HEK293 (cell line): ENCODE measurements at regions of chr5 and their contacts with region 1.

Region 1: GRCh38 chr5:141420855-141421496 is at the start of gene PCDHGA11:
- H3K4me3 ChIP-seq: peak within 1 kb of the TSS; percentile 67
- H3K27ac ChIP-seq: no peak within 1 kb of the TSS
- H3K4me1 ChIP-seq: no peaks in the 10 kb centered on the region
- CTCF ChIP-seq: peak; percentile 59

Region 2: GRCh38 chr5:141392429-141393198 is 28.4 kb before region 1 on chr5 and contains the start of gene PCDHGA8:
- CTCF ChIA-PET with region 1: interaction called, 15 read pairs
- POLR2A ChIA-PET with region 1: no interaction called
- H3K4me3 ChIP-seq: no peak within 1 kb of the TSS
- H3K27ac ChIP-seq: no peak within 1 kb of the TSS
- H3K4me1 ChIP-seq: no peaks in the 10 kb centered on the region
- CTCF ChIP-seq: no peak

Region 3: GRCh38 chr5:141475625-141476131 is 54.7 kb after region 1 on chr5 and contains the start of gene PCDHGC3:
- CTCF ChIA-PET with region 1: interaction called, 10 read pairs
- POLR2A ChIA-PET with region 1: no interaction called
- H3K4me3 ChIP-seq: peak within 1 kb of the TSS; percentile 44
- H3K27ac ChIP-seq: peak within 1 kb of the TSS; percentile 43; the same call in 1 of the 2 replicates
- H3K4me1 ChIP-seq: 0 out of 2 replicates have a peak, but pooled peaks cover 4% of the 10 kb centered on the region
- CTCF ChIP-seq: peak; percentile 59

Region 4: DNA sequence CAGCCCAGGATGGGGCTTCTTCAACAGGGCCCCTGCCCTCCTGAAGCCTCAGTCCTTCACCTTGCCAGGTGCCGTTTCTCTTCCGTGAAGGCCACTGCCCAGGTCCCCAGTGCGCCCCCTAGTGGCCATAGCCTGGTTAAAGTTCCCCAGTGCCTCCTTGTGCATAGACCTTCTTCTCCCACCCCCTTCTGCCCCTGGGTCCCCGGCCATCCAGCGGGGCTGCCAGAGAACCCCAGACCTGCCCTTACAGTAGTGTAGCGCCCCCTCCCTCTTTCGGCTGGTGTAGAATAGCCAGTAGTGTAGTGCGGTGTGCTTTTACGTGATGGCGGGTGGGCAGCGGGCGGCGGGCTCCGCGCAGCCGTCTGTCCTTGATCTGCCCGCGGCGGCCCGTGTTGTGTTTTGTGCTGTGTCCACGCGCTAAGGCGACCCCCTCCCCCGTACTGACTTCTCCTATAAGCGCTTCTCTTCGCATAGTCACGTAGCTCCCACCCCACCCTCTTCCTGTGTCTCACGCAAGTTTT is 91.5 kb after region 1 on chr5:
- CTCF ChIA-PET with region 1: interaction called, 40 read pairs
- POLR2A ChIA-PET with region 1: no interaction called
- H3K4me3 ChIP-seq: no peak overlapping the region
- H3K27ac ChIP-seq: no peak overlapping the region
- H3K4me1 ChIP-seq: no peaks in the 10 kb centered on the region; the same call in 1 of the 2 replicates
- CTCF ChIP-seq: peak; percentile 68

Region 5: DNA sequence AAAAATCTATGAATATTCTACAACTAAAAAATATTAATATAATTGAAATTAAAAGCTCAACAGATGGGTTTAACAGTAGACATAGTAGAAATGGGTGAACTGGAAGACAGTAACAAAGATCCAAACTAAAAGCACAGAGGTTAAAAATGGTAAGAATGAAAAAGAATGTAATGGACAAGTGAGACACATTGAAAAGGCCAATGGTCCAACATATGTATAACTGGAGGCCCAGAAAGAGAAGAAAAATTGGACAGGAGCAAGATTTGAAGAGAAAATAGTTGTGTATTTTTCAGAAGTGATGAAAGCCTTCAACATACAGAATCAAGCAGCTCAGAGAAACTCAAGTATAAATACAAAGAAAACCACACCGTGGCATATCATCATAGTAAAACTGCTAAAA is 126.5 kb after region 1 on chr5:
- CTCF ChIA-PET with region 1: interaction called, 14 read pairs
- POLR2A ChIA-PET with region 1: no interaction called
- H3K4me3 ChIP-seq: no peak overlapping the region
- H3K27ac ChIP-seq: no peak overlapping the region
- H3K4me1 ChIP-seq: no peaks in the 10 kb centered on the region
- CTCF ChIP-seq: no peak